Activated CD4-positive, alpha-beta T cell treated with anti-CD3 and anti-CD28 coated beads for 36 hours (primary cell): ENCODE measurements at regions of chr17 and their contacts with region 1.

Region 1: GRCh38 chr17:75261336-75262111 is at the starts of genes GGA3 and MRPS7:
- DNase-seq: peak; percentile 98
- ATAC-seq: peak; percentile 91
- H3K4me3 Mint-ChIP-seq: peak within 1 kb of the TSS; percentile 88
- H3K27ac Mint-ChIP-seq: peak within 1 kb of the TSS; percentile 96
- H3K4me1 Mint-ChIP-seq: peaks cover 48% of the 10 kb centered on the region
- H3K27me3 Mint-ChIP-seq: no peaks in the 10 kb centered on the region
- total RNA-seq, gene GGA3: 72.9 to 76.7 TPM
- total RNA-seq, gene MRPS7: 51.4 to 63.8 TPM

Region 2: GRCh38 chr17:74690409-74690825 is 571.1 kb before region 1 on chr17:
- CTCF ChIA-PET with region 1: no interaction called
- POLR2A ChIA-PET with region 1: no interaction called
- intact Hi-C with region 1: no loop called
- DNase-seq: no peak
- ATAC-seq: peak; percentile 42
- H3K4me3 Mint-ChIP-seq: no peak overlapping the region
- H3K27ac Mint-ChIP-seq: no peak overlapping the region
- H3K4me1 Mint-ChIP-seq: peaks cover 4% of the 10 kb centered on the region
- H3K27me3 Mint-ChIP-seq: no peaks in the 10 kb centered on the region

Region 3: GRCh38 chr17:75131280-75132017 is 130.1 kb before region 1 on chr17 and contains the start of gene NT5C:
- CTCF ChIA-PET with region 1: interaction called, 3 read pairs
- POLR2A ChIA-PET with region 1: no interaction called
- intact Hi-C with region 1: loop called in 1 of 2 experiments (anchors 1 kb)
- DNase-seq: peak; percentile 84
- ATAC-seq: peak; percentile 82
- H3K4me3 Mint-ChIP-seq: peak within 1 kb of the TSS; percentile 83
- H3K27ac Mint-ChIP-seq: peak within 1 kb of the TSS; percentile 90
- H3K4me1 Mint-ChIP-seq: peaks cover 11% of the 10 kb centered on the region
- H3K27me3 Mint-ChIP-seq: no peaks in the 10 kb centered on the region
- total RNA-seq, gene NT5C: 51.7 to 61.5 TPM

Region 4: GRCh38 chr17:75238684-75239191 is 22.8 kb before region 1 on chr17:
- CTCF ChIA-PET with region 1: interaction called, 60 read pairs
- POLR2A ChIA-PET with region 1: interaction called, 14 read pairs
- intact Hi-C with region 1: no loop called
- DNase-seq: peak; percentile 79
- ATAC-seq: peak; percentile 71
- H3K4me3 Mint-ChIP-seq: no peak overlapping the region
- H3K27ac Mint-ChIP-seq: peak overlapping the region; percentile 87
- H3K4me1 Mint-ChIP-seq: peaks cover 37% of the 10 kb centered on the region
- H3K27me3 Mint-ChIP-seq: no peaks in the 10 kb centered on the region

Region 5: DNA sequence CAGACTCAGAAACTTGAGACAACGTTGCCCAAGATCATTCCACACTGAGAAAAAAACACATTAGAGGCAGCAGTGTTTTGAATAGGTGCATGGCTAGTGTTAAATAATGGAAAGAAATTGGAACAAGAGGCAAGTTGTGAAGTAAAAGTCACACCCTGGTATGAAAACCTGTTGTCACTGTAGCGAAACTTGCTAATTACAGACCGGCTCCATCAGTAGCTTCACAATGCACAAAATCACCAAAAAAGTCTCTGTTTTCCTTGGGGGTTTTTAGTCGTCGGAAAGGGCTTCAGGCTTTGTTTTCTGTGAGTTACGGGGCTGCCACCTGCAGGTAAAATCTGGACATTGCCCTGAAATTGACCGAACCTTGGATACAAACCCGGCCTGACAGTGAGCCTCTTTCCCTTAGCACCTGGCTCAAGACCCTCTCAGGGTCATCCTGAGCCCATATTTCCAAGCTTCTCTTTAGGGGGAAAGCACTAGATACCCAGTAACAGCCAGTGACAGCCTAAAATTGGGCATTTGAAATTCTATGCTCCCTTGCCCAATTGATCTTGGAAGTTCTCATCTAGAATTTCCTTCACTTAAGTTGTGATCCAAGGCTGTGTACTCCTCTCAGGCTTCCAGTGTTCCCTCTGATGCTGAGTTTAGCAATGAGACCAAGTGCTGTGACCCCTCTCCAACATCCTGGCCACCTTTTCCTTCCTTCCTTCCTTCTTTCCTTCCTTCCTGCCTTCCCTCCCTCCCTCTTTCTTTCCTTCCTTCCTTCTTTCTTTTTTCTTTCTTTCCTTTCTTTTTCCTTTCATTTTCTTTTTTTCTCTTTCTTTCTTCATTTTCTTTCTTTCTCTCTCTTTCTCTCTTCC is 151.2 kb after region 1 on chr17:
- CTCF ChIA-PET with region 1: interaction called, 5 read pairs
- POLR2A ChIA-PET with region 1: interaction called, 3 read pairs
- intact Hi-C with region 1: loop called in 1 of 2 experiments (anchors 1 kb)
- DNase-seq: peak; percentile 84
- ATAC-seq: peak; percentile 85
- H3K4me3 Mint-ChIP-seq: peak overlapping the region; percentile 44
- H3K27ac Mint-ChIP-seq: peak overlapping the region; percentile 3
- H3K4me1 Mint-ChIP-seq: peaks cover 15% of the 10 kb centered on the region
- H3K27me3 Mint-ChIP-seq: no peaks in the 10 kb centered on the region

Region 6: GRCh38 chr17:75625813-75626486 is 364.4 kb after region 1 on chr17:
- CTCF ChIA-PET with region 1: no interaction called
- POLR2A ChIA-PET with region 1: no interaction called
- intact Hi-C with region 1: no loop called
- DNase-seq: peak; percentile 51
- ATAC-seq: peak; percentile 78
- H3K4me3 Mint-ChIP-seq: no peak overlapping the region
- H3K27ac Mint-ChIP-seq: no peak overlapping the region
- H3K4me1 Mint-ChIP-seq: no peaks in the 10 kb centered on the region
- H3K27me3 Mint-ChIP-seq: no peaks in the 10 kb centered on the region

Region 7: GRCh38 chr17:75667021-75667790 is 405.7 kb after region 1 on chr17 and contains the starts of genes RECQL5 and SAP30BP:
- CTCF ChIA-PET with region 1: no interaction called
- POLR2A ChIA-PET with region 1: no interaction called
- intact Hi-C with region 1: loop called in 1 of 2 experiments (anchors 1 kb)
- DNase-seq: peak; percentile 99
- ATAC-seq: peak; percentile 100
- H3K4me3 Mint-ChIP-seq: no peak within 1 kb of the TSS
- H3K27ac Mint-ChIP-seq: no peak within 1 kb of the TSS
- H3K4me1 Mint-ChIP-seq: peaks cover 34% of the 10 kb centered on the region
- H3K27me3 Mint-ChIP-seq: no peaks in the 10 kb centered on the region
- total RNA-seq, gene RECQL5: 36.4 to 40.5 TPM
- total RNA-seq, gene SAP30BP: 87.8 to 100.0 TPM